IMR-90 (cell line): ENCODE measurements at regions of chr18 and their contacts with region 1.

Region 1: DNA sequence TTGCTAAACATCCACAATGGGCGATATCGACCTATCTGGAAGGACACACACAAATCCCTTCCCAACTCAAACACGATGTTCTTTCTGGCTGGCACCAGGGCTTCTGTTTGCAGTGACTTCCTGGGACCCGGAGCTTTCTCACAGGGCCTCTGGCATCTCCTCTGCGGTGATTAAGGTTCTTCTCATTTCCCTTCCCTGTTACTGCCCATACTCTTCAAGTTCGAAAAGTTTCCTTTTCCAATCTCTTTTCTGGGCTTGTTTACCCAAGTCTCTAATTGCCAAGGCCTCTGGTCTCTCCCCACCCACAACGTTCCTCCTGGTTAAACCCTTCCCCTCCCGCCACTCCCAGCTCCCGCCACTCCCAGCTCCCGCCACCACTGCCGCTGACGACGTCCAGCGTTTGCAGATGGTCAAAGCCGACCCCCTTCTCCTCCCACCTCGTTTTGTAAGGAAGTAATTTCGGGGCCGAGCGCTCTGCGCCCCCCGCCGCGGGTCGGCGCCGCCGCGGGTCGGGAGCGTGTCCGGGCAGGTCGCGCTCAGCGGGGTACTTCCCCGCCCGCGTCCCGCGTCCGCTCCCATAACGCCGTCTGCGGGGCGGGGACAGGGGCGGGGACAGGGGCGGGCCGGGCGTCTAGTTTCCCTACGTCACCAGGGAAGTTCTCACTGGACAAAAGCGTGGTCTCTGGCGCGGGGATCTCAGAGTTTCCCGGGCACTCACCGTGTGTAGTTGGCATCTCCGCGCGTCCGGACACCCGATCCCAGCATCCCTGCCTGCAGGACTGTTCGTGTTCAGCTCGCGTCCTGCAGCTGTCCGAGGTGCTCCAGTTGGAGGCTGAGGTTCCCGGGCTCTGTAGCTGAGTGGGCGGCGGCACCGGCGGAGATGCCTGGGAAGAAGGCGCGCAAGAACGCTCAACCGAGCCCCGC is at the start of gene PMAIP1:
- DNase-seq: peak; percentile 94
- ATAC-seq: peak; percentile 91
- H3K4me3 ChIP-seq: peak within 1 kb of the TSS; percentile 76
- H3K27ac ChIP-seq: peak within 1 kb of the TSS; percentile 97
- H3K4me1 ChIP-seq: peaks cover 11% of the 10 kb centered on the region
- H3K27me3 ChIP-seq: no peaks in the 10 kb centered on the region
- CTCF ChIP-seq: no peak
- POLR2A ChIP-seq: peak; percentile 100
- RAD21 ChIP-seq: peak; percentile 39; the same call in 1 of the 2 replicates
- total RNA-seq, gene PMAIP1: 14.0 and 26.9 TPM in 2 replicates

Region 2: DNA sequence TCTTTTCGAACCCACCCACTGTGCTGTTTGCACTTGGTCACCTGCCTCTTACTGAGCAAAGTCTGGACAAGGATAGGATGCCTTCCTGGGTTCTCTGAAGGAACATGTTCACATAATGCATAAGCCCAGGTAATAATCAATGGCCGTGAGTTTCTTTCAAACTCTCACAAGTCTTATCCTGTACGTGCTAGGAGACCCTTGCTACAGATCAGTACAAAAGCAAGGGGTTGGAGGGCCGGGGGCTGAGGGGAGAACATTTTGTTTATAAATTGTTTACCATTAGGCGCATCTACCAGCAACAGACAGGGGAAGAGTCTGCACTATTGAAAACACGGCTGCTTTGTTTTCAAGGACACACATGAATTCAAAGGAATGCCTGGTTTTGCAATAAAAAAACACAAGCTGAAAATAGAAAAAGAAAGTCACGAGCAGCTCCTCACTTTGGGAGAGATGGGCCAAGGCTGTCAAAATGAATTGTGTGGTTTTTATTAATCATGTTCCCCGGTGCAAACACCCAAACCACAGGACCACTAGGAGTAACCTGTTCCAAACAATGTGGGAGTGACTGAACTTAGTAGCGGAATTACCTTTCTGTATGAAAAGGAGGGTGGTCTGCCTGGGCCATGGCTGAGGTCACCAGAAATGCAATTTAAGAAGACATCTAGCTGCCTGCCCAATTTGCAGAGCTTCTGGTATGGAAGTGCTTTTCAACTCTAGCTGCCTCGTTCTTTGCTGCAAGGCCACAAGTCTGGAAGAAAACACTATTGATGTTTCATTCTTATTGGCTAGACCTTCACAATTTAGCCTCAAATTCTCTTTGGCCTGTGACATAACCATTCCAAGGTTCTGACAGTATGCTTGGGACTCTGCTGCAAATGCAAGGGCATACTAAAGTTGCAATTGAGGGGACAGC is 275.8 kb before region 1 on chr18:
- CTCF ChIA-PET with region 1: no interaction called
- POLR2A ChIA-PET with region 1: no interaction called
- dilution Hi-C with region 1: no loop called
- in situ Hi-C with region 1: no loop called
- intact Hi-C with region 1: loop called (anchors 10 kb)
- DNase-seq: peak; percentile 63
- ATAC-seq: peak; percentile 65
- H3K4me3 ChIP-seq: no peak overlapping the region
- H3K27ac ChIP-seq: peak overlapping the region; percentile 40; the same call in 1 of the 2 replicates
- H3K4me1 ChIP-seq: peaks cover 20% of the 10 kb centered on the region
- H3K27me3 ChIP-seq: no peaks in the 10 kb centered on the region
- CTCF ChIP-seq: no peak
- POLR2A ChIP-seq: no peak
- RAD21 ChIP-seq: no peak

Region 3: DNA sequence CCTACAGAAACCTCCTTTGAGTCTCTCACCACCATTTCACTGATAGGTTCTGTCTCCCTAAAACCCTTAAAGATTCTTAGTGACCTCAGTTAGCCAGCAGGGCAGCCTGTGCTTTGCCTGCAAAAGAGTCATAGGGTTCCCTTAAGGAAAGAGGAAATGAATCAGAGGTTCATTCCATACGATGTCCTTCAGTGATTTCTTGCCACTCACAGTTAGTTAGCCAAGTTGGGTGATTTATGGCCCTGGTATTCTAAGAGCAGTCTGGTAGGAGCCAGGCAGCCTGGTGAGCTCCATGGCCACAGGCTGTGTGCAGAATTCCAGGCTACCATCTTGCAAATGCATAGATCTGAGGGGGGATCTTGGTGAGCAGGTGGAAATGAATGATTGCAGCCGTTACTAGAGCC is 183.6 kb before region 1 on chr18:
- CTCF ChIA-PET with region 1: no interaction called
- POLR2A ChIA-PET with region 1: no interaction called
- dilution Hi-C with region 1: no loop called
- in situ Hi-C with region 1: no loop called
- intact Hi-C with region 1: loop called (anchors 5 kb)
- DNase-seq: peak; percentile 95
- ATAC-seq: peak; percentile 61
- H3K4me3 ChIP-seq: no peak overlapping the region
- H3K27ac ChIP-seq: peak overlapping the region; percentile 35
- H3K4me1 ChIP-seq: peaks cover 37% of the 10 kb centered on the region
- H3K27me3 ChIP-seq: no peaks in the 10 kb centered on the region
- CTCF ChIP-seq: 0 out of 2 replicates have a peak, but pooled peaks have one; percentile 16
- POLR2A ChIP-seq: no peak
- RAD21 ChIP-seq: peak; percentile 31; the same call in 1 of the 2 replicates

Region 4: GRCh38 chr18:59861963-59862819 is 37.4 kb before region 1 on chr18:
- CTCF ChIA-PET with region 1: no interaction called
- POLR2A ChIA-PET with region 1: no interaction called
- dilution Hi-C with region 1: no loop called
- in situ Hi-C with region 1: no loop called
- intact Hi-C with region 1: loop called (anchors 5 kb)
- DNase-seq: no peak
- ATAC-seq: no peak
- H3K4me3 ChIP-seq: no peak overlapping the region
- H3K27ac ChIP-seq: no peak overlapping the region
- H3K4me1 ChIP-seq: no peaks in the 10 kb centered on the region
- H3K27me3 ChIP-seq: peaks cover 2% of the 10 kb centered on the region; the same call in 1 of the 2 replicates
- CTCF ChIP-seq: no peak
- POLR2A ChIP-seq: no peak
- RAD21 ChIP-seq: no peak

Region 5: GRCh38 chr18:59957971-59958595 is 58.5 kb after region 1 on chr18:
- CTCF ChIA-PET with region 1: no interaction called
- POLR2A ChIA-PET with region 1: interaction called, 3 read pairs
- dilution Hi-C with region 1: no loop called
- in situ Hi-C with region 1: no loop called
- intact Hi-C with region 1: loop called (anchors 2 kb)
- DNase-seq: peak; percentile 83
- ATAC-seq: peak; percentile 54; the same call in 1 of the 2 replicates
- H3K4me3 ChIP-seq: no peak overlapping the region
- H3K27ac ChIP-seq: no peak overlapping the region
- H3K4me1 ChIP-seq: peaks cover 6% of the 10 kb centered on the region
- H3K27me3 ChIP-seq: no peaks in the 10 kb centered on the region
- CTCF ChIP-seq: no peak
- POLR2A ChIP-seq: no peak
- RAD21 ChIP-seq: no peak